Activated T-helper 1 cell treated with anti-CD3 and anti-CD28 coated beads, Interleukin-12 subunit alpha, Interleukin-12 subunit beta, Interleukin-2, Interleukin-4 antibody, amounts not matched to agents 30 ng/mL and 10 ng/mL and 1 ng/mL, durations not matched to agents 14 hours and 24 hours and 36 hours (primary cell): ENCODE measurements at regions of chr6 and their contacts with region 1.

Region 1: DNA sequence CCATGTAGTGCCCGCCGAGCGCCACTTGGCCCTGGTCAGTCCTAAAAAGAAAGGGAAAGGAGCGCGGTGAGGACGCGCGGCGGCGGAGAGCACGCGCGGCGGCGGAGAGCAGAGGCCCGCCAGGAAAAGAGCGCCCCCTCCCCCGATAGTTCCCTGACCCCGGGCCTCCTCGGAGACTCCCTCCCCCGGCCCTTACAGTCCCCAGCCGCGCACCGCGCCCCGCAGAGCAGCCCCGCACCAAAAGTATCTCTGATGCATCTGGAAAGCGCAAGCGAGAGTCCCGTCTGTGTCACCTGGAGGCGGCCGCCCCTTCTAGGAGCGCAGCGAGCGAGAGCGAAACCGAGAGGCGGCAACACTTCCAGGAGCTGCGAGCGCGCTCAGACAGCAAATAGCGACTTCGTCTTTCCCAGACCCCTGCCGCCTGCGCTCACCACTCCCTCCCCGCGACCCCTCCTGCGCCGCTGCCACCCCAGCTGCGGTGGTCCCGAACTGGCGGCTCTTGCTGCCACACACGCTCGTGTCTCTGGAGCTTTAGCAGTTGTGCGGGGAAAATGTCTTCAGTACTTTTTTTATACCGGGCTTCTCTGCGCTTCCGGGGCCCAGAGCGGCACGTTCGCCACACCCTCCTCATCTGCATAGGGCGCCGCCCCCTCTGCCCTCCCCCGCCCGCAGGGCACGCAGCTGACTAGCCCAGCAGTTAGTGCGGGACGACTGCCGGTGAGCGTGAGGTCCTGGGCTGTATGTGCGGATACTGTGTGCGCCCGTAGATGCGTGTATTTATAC is at the start of gene TENT5A:
- DNase-seq: peak; percentile 78
- H3K4me3 Mint-ChIP-seq: peak within 1 kb of the TSS; percentile 88
- H3K27ac Mint-ChIP-seq: peak within 1 kb of the TSS; percentile 72
- H3K4me1 Mint-ChIP-seq: peaks cover 16% of the 10 kb centered on the region
- H3K27me3 Mint-ChIP-seq: peaks cover 43% of the 10 kb centered on the region
- total RNA-seq, gene TENT5A: 0.34 and 0.47 TPM in 2 replicates

Region 2: GRCh38 chr6:80106418-80107235 is 1645.7 kb before region 1 on chr6 and contains the start of gene BCKDHB:
- intact Hi-C with region 1: loop called (anchors 2 kb)
- DNase-seq: peak; percentile 98
- H3K4me3 Mint-ChIP-seq: peak within 1 kb of the TSS; percentile 96
- H3K27ac Mint-ChIP-seq: peak within 1 kb of the TSS; percentile 90
- H3K4me1 Mint-ChIP-seq: peaks cover 31% of the 10 kb centered on the region
- H3K27me3 Mint-ChIP-seq: peaks cover 2% of the 10 kb centered on the region
- total RNA-seq, gene BCKDHB: 13.3 and 14.4 TPM in 2 replicates

Region 3: GRCh38 chr6:80338201-80338836 is 1414.0 kb before region 1 on chr6:
- intact Hi-C with region 1: loop called (anchors 1 kb)
- DNase-seq: peak; percentile 32
- H3K4me3 Mint-ChIP-seq: no peak overlapping the region
- H3K27ac Mint-ChIP-seq: no peak overlapping the region
- H3K4me1 Mint-ChIP-seq: no peaks in the 10 kb centered on the region
- H3K27me3 Mint-ChIP-seq: no peaks in the 10 kb centered on the region

Region 4: DNA sequence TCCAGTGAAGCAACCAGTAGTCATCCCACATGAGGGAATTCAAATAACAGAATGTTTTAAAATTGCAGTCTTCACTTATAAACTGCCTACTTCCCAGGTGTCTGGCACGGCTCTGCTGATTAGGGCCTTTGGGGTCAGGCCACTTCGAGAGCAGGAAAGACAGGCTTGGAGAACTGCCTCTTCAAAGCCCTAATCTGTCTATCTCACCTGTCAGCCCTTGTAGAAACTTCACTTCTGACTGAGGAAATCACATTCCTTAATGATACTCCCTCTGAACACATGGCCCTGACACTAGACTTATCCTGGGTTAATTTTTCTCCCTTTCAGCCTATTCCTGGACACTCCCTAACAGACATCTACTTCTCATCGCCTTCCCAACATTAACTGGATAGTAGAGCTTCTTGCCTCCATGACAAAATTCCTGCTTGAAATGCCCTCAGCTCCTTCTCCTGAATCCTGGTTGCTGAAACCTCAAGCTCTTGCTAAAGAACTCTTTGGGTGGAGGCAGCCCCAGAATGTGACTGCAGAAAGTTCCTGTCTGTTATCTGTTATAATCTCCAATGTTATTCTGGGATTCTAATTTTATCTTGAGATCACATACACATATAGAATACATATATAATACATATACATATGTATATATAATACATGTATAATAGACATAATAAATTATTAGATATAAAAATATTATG is 458.2 kb before region 1 on chr6:
- intact Hi-C with region 1: no loop called
- DNase-seq: no peak
- H3K4me3 Mint-ChIP-seq: no peak overlapping the region
- H3K27ac Mint-ChIP-seq: no peak overlapping the region
- H3K4me1 Mint-ChIP-seq: no peaks in the 10 kb centered on the region
- H3K27me3 Mint-ChIP-seq: no peaks in the 10 kb centered on the region

Region 5: GRCh38 chr6:81772741-81773140 is 20.4 kb after region 1 on chr6:
- intact Hi-C with region 1: loop called (anchors 1 kb)
- DNase-seq: no peak
- H3K4me3 Mint-ChIP-seq: no peak overlapping the region
- H3K27ac Mint-ChIP-seq: no peak overlapping the region
- H3K4me1 Mint-ChIP-seq: peaks cover 10% of the 10 kb centered on the region
- H3K27me3 Mint-ChIP-seq: peaks cover 4% of the 10 kb centered on the region

Region 6: DNA sequence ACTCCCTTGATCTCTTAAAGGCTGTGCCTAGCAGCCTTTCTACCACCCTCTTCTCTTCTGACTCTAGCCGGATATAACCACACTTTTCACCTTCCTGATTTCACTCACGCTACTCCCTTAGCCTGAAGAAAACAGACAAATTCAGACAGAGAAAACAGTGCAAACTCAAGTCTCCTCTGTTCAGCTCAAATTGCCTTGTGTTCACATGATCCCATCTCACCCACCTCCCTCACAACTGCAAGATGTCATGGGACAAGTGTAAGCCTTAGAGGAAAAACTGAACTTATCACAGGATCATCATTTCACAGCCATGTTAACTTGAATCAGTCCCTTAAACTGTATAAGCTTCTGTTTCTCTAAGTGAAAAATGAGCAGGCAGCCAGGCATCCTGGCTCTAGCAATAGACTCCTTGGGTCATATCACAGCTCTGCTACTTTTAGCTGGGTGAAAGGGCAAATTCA is 66.6 kb after region 1 on chr6:
- intact Hi-C with region 1: loop called (anchors 2 kb)
- DNase-seq: no peak
- H3K4me3 Mint-ChIP-seq: no peak overlapping the region
- H3K27ac Mint-ChIP-seq: peak overlapping the region; percentile 18
- H3K4me1 Mint-ChIP-seq: peaks cover 18% of the 10 kb centered on the region
- H3K27me3 Mint-ChIP-seq: peaks cover 4% of the 10 kb centered on the region

Region 7: DNA sequence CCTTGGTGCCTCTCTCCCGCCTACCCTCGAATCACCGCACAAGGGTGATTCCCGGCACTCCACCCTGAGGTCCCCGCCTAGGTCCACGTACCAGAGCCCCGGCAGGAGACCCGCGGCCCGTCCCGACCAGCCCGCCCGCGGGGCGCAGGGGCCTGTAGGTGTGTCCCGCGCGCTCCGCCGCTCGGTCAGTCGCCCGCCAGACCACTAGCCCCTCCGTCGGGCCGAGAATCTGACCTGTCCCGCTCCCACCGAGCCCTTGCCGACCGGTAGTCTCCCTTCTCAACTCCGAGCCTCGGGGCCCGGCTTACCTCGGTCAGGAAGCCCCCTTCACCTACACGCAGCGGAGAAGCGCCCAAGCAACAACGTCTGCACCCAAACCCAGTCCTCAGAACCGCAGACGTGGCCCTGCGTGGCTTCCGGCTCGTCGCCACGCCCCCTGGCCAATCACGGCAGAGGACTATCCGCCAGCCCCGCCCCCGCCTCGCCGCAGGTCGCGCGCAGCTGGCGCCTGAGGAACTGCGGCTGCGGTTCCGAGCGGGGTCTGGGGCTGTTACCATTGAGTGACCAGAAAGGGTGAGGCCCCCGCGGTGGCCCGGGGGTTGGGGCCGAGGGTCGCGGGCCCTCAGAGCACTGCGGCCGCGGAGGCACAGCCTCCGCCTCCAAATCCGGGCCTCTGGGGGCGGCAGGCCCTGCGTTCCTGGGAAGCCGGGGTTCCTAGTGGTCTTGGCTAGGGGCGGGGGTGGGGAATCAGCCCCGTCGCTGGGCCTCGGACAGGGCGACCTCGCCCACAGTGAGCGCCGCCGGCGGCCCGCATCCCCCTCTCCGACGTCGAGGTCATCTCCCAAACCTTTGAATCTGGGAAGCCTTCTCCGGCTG is 1440.8 kb after region 1 on chr6 and contains the starts of genes PGM3 and RWDD2A:
- intact Hi-C with region 1: loop called (anchors 10 kb)
- DNase-seq: peak; percentile 85
- H3K4me3 Mint-ChIP-seq: peak within 1 kb of the TSS; percentile 98
- H3K27ac Mint-ChIP-seq: peak within 1 kb of the TSS; percentile 94
- H3K4me1 Mint-ChIP-seq: peaks cover 38% of the 10 kb centered on the region
- H3K27me3 Mint-ChIP-seq: peaks cover 2% of the 10 kb centered on the region
- total RNA-seq, gene PGM3: 24.8 and 25.4 TPM in 2 replicates
- total RNA-seq, gene RWDD2A: 0.98 and 1.3 TPM in 2 replicates